ENCODE measurements at regions of chr17 and their contacts with region 1.

Region 1: DNA sequence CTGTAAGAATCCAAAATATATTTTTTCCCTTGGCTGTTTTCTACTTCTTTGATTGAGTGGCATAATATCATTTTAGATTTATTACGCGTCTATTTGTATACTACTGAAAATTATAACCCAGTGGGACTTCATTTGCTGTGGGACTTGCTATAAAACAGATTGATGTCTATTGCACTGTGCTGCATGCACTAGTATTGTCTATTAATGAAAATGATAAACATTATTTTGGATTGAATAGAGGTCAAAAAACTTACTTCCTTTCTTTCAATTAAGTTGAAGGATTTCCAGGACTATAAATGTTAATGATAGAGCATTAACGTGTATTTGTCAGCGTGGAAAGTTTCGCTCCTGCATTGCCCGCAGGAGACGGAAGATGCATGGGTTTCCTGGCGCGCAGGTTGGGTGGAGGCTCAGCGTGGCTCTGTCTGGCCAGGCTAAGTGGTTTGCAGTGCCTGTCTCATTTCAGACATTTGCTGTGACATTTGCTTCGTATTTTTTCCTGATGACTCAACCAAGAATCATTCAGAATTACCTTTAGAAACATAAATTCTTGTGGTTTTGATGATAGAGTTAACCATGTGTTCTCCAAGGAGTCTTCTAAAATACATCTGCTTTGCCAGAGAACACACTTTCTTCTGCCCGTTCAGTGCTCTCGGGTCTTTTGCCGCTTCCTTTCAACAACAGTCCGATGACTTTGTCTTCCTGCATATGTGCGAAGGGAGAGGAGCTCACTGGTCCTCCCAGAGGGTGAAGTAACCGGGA is 216.7 kb downstream of the RPTOR start:
- DNase-seq: peak; percentile 87
- ATAC-seq: peak; percentile 79
- H3K4me3 Mint-ChIP-seq: peak overlapping the region; percentile 62
- H3K27ac Mint-ChIP-seq: peak overlapping the region; percentile 99
- H3K4me1 Mint-ChIP-seq: peaks cover 76% of the 10 kb centered on the region
- H3K27me3 Mint-ChIP-seq: no peaks in the 10 kb centered on the region
- CTCF ChIP-seq: no peak

Region 2: GRCh38 chr17:80773243-80773991 is 12.1 kb after region 1 on chr17:
- CTCF ChIA-PET with region 1: interaction called, 13 read pairs
- POLR2A ChIA-PET with region 1: interaction called, 7 read pairs
- intact Hi-C with region 1: no loop called
- DNase-seq: peak; percentile 29
- ATAC-seq: peak; percentile 47
- H3K4me3 Mint-ChIP-seq: no peak overlapping the region
- H3K27ac Mint-ChIP-seq: peak overlapping the region; percentile 95
- H3K4me1 Mint-ChIP-seq: peaks cover 64% of the 10 kb centered on the region
- H3K27me3 Mint-ChIP-seq: no peaks in the 10 kb centered on the region
- CTCF ChIP-seq: no peak

Region 3: DNA sequence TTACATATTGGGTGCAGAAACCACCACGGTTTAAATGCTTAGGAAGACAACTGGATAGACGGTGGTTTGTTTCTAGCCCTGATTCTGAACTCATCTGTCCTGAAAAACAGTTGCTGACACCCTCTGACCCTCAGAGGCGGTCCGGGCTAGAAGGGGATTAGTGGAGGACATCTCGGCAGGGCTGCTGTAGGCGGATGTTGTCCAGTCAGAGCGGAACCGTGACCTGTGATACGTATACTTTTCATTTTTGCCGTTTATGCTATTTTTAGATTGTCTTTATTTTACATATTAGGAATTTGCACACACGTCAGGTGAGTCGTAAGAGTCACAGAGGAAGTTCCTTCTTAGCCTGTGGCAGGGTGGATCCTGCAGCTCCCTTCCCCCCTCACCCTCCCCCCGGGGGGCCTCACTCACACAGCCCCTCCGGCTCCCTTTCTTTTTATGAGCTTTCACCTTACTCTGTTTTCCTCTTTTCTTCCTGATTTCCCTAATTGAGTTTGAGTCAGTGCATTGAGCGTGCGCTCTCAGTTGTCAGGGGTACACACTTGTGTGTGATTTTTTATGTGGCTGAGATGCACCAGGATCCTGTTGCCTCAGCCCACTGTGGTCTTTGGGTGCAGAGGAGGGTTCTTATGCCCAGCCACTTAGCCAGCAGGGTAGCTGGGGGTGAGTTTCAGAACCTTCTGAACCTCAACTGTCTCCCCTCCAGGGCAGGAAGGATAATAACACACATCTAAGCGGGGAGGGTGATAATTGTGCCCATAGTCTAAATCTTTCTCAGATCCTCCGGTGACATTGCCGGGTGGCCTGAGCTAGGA is 19.3 kb after region 1 on chr17:
- CTCF ChIA-PET with region 1: interaction called, 6 read pairs
- POLR2A ChIA-PET with region 1: interaction called, 15 read pairs
- intact Hi-C with region 1: no loop called
- DNase-seq: peak; percentile 63
- ATAC-seq: peak; percentile 54
- H3K4me3 Mint-ChIP-seq: peak overlapping the region; percentile 60
- H3K27ac Mint-ChIP-seq: peak overlapping the region; percentile 91
- H3K4me1 Mint-ChIP-seq: peaks cover 80% of the 10 kb centered on the region
- H3K27me3 Mint-ChIP-seq: no peaks in the 10 kb centered on the region
- CTCF ChIP-seq: no peak

Region 4: DNA sequence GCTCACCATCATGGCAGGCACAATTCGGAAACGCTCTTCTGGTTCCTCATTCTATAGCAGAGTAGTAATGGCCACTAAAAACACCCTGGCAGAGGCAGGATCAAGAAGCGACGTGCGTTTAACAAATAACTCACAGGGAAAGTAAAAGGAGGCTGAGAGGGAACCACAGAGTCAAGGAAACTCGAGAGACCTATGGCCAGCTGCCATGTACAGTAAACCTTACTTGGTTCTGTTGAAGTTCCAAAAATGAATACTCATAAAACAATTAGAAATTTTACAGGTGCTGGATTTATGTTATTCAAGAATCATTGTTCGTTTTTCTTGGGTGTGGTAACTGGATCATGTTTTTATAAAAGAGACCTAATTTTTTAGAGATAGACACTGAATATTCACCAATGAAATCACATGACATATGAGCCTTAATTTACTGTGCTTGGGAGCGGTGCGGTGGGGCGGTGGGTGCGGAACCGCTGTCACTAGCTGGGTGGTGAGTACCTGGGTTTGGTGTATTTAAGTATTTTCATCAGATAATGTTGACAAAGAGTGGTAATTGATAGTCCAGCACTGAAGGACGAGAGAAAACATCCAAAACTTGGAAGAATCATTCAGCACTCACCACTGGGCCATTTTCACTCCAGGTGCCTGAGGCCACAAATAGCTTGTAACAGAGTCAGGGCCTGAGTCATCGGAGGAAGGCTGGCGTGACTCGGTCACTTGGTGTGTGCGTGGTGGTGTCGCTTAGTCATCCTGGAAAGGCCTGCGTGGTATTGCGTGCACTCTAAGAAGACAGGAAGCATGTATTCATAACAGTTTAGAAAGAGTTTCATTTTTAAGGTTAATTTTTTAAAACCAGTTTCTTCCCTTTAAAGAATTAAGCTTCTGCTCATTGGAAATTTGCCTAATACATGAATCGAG is 94.9 kb after region 1 on chr17:
- CTCF ChIA-PET with region 1: interaction called, 4 read pairs
- POLR2A ChIA-PET with region 1: interaction called, 4 read pairs
- intact Hi-C with region 1: loop called (anchors 5 kb)
- DNase-seq: peak; percentile 97
- ATAC-seq: peak; percentile 97
- H3K4me3 Mint-ChIP-seq: peak overlapping the region; percentile 41
- H3K27ac Mint-ChIP-seq: peak overlapping the region; percentile 98
- H3K4me1 Mint-ChIP-seq: peaks cover 62% of the 10 kb centered on the region
- H3K27me3 Mint-ChIP-seq: no peaks in the 10 kb centered on the region
- CTCF ChIP-seq: no peak

Region 5: GRCh38 chr17:80866147-80866793 is 105.0 kb after region 1 on chr17:
- CTCF ChIA-PET with region 1: no interaction called
- POLR2A ChIA-PET with region 1: no interaction called
- intact Hi-C with region 1: no loop called
- DNase-seq: peak; percentile 87
- ATAC-seq: peak; percentile 69
- H3K4me3 Mint-ChIP-seq: no peak overlapping the region
- H3K27ac Mint-ChIP-seq: peak overlapping the region; percentile 78
- H3K4me1 Mint-ChIP-seq: peaks cover 83% of the 10 kb centered on the region
- H3K27me3 Mint-ChIP-seq: no peaks in the 10 kb centered on the region
- CTCF ChIP-seq: peak; percentile 71

Region 6: DNA sequence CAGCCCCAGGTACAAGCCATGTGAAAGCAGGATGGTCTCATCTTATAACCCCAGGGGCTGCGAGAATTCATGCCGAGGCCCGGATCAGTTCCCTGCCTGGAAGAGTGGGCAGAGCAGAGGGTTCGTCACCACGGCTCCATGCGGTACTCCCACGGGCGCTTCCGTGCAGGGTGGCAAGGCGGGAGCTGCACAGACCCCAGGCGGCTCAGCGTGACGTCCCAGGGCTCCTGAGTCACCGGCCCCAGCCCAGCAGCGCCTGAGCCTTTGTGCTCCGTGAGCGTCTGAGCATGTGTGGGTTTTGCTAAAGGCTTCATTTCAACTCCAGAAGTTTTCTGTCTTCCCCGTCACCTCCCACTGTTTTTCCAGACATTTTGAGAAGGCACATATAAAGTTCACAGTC is 159.2 kb after region 1 on chr17:
- CTCF ChIA-PET with region 1: no interaction called
- POLR2A ChIA-PET with region 1: no interaction called
- intact Hi-C with region 1: no loop called
- DNase-seq: no peak
- ATAC-seq: no peak
- H3K4me3 Mint-ChIP-seq: no peak overlapping the region
- H3K27ac Mint-ChIP-seq: no peak overlapping the region
- H3K4me1 Mint-ChIP-seq: no peaks in the 10 kb centered on the region
- H3K27me3 Mint-ChIP-seq: no peaks in the 10 kb centered on the region
- CTCF ChIP-seq: no peak

Measured in activated CD8-positive, alpha-beta T cell treated with anti-CD3 and anti-CD28 coated beads for 36 hours (primary cell).